ENCODE measurements at regions of chr14 and their contacts with region 1.

Region 1: GRCh38 chr14:54175298-54175942 is 218.8 kb upstream of the BMP4 start:
- DNase-seq: peak; percentile 72
- ATAC-seq: no peak
- H3K4me3 Mint-ChIP-seq: no peak overlapping the region
- H3K27ac Mint-ChIP-seq: no peak overlapping the region
- H3K4me1 Mint-ChIP-seq: no peaks in the 10 kb centered on the region
- H3K27me3 Mint-ChIP-seq: peaks cover 24% of the 10 kb centered on the region

Region 2: GRCh38 chr14:52824507-52824906 is 1350.9 kb before region 1 on chr14:
- CTCF ChIA-PET with region 1: no interaction called
- POLR2A ChIA-PET with region 1: no interaction called
- intact Hi-C with region 1: loop called in 1 of 2 experiments (anchors 5 kb)
- DNase-seq: no peak
- ATAC-seq: no peak
- H3K4me3 Mint-ChIP-seq: no peak overlapping the region
- H3K27ac Mint-ChIP-seq: no peak overlapping the region
- H3K4me1 Mint-ChIP-seq: peaks cover 3% of the 10 kb centered on the region
- H3K27me3 Mint-ChIP-seq: peaks cover 3% of the 10 kb centered on the region

Region 3: DNA sequence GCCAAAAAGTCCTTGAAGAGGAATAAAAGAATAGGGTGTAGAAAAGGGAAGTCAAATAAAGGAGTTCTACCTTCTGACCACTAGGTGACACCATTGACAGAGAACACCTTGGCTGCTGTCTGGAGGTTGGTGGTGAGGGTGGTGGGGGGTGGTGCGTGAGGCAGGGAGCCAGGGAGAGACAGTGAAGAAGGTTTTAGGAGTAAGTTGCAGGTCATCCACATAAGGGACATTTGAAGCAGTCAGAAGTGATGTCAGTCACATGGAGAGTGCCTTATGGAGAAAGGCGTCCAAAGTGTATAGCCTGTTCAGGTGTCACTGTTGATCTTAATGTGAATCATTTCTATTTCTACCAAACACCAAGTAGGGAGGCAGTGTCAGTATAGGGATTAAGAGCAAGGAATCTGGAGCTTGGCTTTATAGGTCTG is 743.0 kb before region 1 on chr14:
- CTCF ChIA-PET with region 1: no interaction called
- POLR2A ChIA-PET with region 1: no interaction called
- intact Hi-C with region 1: loop called in 1 of 2 experiments (anchors 1 kb)
- DNase-seq: peak; percentile 12
- ATAC-seq: peak; percentile 44
- H3K4me3 Mint-ChIP-seq: no peak overlapping the region
- H3K27ac Mint-ChIP-seq: no peak overlapping the region
- H3K4me1 Mint-ChIP-seq: no peaks in the 10 kb centered on the region
- H3K27me3 Mint-ChIP-seq: peaks cover 3% of the 10 kb centered on the region

Region 4: GRCh38 chr14:53539489-53540126 is 635.8 kb before region 1 on chr14:
- CTCF ChIA-PET with region 1: interaction called, 3 read pairs
- POLR2A ChIA-PET with region 1: no interaction called
- intact Hi-C with region 1: loop called (anchors 1 kb)
- DNase-seq: peak; percentile 78
- ATAC-seq: no peak
- H3K4me3 Mint-ChIP-seq: no peak overlapping the region
- H3K27ac Mint-ChIP-seq: no peak overlapping the region
- H3K4me1 Mint-ChIP-seq: no peaks in the 10 kb centered on the region
- H3K27me3 Mint-ChIP-seq: peaks cover 2% of the 10 kb centered on the region

Region 5: GRCh38 chr14:53646925-53647324 is 528.5 kb before region 1 on chr14:
- CTCF ChIA-PET with region 1: no interaction called
- POLR2A ChIA-PET with region 1: no interaction called
- intact Hi-C with region 1: no loop called
- DNase-seq: no peak
- ATAC-seq: no peak
- H3K4me3 Mint-ChIP-seq: no peak overlapping the region
- H3K27ac Mint-ChIP-seq: no peak overlapping the region
- H3K4me1 Mint-ChIP-seq: no peaks in the 10 kb centered on the region
- H3K27me3 Mint-ChIP-seq: peaks cover 3% of the 10 kb centered on the region

Region 6: DNA sequence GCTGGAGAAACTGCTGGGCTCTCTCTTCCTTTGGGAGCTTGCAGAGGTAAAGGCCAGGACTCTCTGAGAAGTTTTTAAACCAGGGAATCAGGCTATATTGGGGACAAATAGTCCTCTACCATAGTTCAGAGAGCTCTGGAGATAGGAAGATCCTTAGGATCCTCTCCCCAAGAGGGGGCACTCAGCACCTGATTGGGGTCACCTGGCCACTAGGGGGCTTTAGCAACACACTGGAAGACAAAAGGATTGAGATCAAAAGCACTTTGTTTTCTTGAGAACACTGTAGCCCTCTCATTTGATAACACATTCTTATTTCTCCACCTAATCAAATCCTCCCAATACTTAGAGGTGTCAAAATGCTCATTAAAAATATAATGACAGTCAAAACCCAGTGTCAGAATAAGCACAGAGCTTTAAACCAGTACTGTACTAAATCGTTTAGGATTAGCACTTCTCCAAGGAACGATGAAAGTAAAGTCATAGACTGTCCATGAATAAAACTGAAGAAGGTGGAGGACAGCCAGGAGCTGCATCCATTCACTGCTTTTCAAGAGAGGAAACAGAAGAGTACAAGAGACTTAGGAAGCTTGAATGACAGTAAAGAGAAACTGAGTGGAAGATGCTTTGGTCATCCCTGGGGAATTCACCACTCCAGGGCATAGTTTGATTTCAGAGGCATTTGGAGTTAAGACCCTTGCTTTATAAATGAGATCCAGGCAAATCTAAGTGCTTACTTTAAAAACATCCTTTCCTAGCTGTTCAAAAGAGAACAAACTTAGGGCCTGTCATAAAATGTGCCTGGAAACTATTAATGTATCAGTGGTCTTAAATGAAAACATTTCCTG is 245.3 kb before region 1 on chr14:
- CTCF ChIA-PET with region 1: interaction called, 3 read pairs
- POLR2A ChIA-PET with region 1: no interaction called
- intact Hi-C with region 1: loop called (anchors 1 kb)
- DNase-seq: peak; percentile 61
- ATAC-seq: no peak
- H3K4me3 Mint-ChIP-seq: no peak overlapping the region
- H3K27ac Mint-ChIP-seq: no peak overlapping the region
- H3K4me1 Mint-ChIP-seq: no peaks in the 10 kb centered on the region
- H3K27me3 Mint-ChIP-seq: peaks cover 9% of the 10 kb centered on the region

Region 7: GRCh38 chr14:54186821-54187763 is 11.7 kb after region 1 on chr14:
- CTCF ChIA-PET with region 1: interaction called, 12 read pairs
- POLR2A ChIA-PET with region 1: no interaction called
- intact Hi-C with region 1: no loop called
- DNase-seq: no peak
- ATAC-seq: no peak
- H3K4me3 Mint-ChIP-seq: no peak overlapping the region
- H3K27ac Mint-ChIP-seq: no peak overlapping the region
- H3K4me1 Mint-ChIP-seq: peaks cover 3% of the 10 kb centered on the region
- H3K27me3 Mint-ChIP-seq: peaks cover 4% of the 10 kb centered on the region

Region 8: DNA sequence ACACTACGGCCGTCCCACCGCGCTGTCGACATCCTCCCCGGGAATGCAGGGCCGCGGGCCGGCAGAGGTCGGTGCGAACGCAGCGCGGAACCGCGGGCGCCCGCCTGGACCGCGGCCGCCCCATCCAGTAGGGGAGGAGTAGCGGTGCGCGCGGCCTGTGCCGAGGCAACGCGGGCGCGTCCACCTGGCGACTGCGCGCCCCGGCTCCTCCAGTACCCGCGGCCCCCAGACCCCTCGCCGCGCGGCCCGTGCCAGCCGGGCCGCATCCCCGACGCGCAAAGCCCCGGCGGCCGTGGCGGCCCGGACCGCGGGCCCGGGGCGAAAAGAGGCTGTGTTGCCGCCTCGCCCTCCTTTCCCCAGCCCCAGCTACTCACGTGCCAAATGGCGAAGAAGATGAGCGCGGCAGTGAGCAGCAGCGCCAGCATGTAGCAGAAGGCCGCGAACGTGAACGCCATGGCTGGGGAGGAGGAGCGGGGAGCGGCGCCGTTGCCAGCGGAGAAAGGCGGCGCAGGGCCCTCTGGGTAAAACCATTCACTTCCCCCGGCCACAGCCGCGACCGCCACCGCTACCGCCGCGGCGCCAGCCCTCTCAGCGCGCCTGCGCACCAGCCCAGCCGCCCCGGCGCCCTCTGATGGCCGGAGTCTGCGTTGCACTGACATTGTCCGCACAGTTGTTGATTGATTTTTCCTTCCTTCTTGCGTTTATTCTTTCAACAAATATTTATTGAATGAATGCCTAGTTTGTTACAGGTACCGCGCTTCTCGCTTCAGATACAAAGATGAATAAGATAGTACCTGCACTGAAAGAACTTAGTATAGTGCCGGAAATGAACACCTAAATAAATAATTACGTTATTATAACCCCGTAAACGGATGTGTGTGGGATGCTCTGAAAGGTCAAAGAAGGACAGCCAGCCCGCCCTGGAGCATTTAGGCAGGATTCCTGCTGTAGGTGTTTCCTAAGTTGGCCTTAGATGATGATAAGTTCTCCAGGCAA is 265.8 kb after region 1 on chr14 and contains the start of gene CNIH1:
- CTCF ChIA-PET with region 1: no interaction called
- POLR2A ChIA-PET with region 1: no interaction called
- intact Hi-C with region 1: no loop called
- DNase-seq: peak; percentile 96
- ATAC-seq: peak; percentile 92
- H3K4me3 Mint-ChIP-seq: peak within 1 kb of the TSS; percentile 80
- H3K27ac Mint-ChIP-seq: peak within 1 kb of the TSS; percentile 99
- H3K4me1 Mint-ChIP-seq: peaks cover 47% of the 10 kb centered on the region
- H3K27me3 Mint-ChIP-seq: no peaks in the 10 kb centered on the region
- total RNA-seq, gene CNIH1: 86.6 to 109 TPM